Caco-2 (cell line): ENCODE measurements at regions of chr4 and their contacts with region 1.

Region 1: DNA sequence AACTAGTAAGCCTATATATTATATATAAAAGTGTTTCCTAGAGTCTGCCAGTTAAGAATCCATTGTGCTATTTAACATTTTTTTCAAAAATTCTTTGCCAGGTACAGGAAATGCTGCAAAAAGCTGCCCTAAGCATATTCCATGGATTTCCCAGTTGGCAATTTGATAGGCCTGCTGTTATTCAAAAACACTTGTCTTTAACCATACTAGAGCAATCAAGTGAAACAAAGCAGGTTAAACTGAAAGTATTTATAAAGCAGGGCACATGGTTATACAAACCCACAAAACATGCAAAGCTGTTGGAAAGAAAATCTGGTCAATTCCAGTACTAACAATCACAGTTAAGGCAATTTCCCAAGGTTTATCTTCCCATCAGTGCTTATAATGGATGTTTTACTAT is 159.9 kb downstream of the UNC5C start:
- DNase-seq: no peak
- H3K4me3 ChIP-seq: no peak overlapping the region
- H3K4me3 Mint-ChIP-seq: no peak overlapping the region
- H3K27ac Mint-ChIP-seq: no peak overlapping the region
- H3K4me1 ChIP-seq: peaks cover 40% of the 10 kb centered on the region
- H3K4me1 Mint-ChIP-seq: peaks cover 29% of the 10 kb centered on the region
- H3K27me3 ChIP-seq: no peaks in the 10 kb centered on the region
- H3K27me3 Mint-ChIP-seq: no peaks in the 10 kb centered on the region
- CTCF ChIP-seq: no peak

Region 2: GRCh38 chr4:95358421-95358820 is 30.5 kb before region 1 on chr4:
- CTCF ChIA-PET with region 1: no interaction called
- POLR2A ChIA-PET with region 1: no interaction called
- intact Hi-C with region 1: loop called (anchors 2 kb)
- DNase-seq: peak; percentile 13 to 39
- H3K4me3 ChIP-seq: no peak overlapping the region
- H3K4me3 Mint-ChIP-seq: no peak overlapping the region
- H3K27ac Mint-ChIP-seq: no peak overlapping the region
- H3K4me1 ChIP-seq: peaks cover 41% of the 10 kb centered on the region
- H3K4me1 Mint-ChIP-seq: peaks cover 9% of the 10 kb centered on the region
- H3K27me3 ChIP-seq: no peaks in the 10 kb centered on the region
- H3K27me3 Mint-ChIP-seq: no peaks in the 10 kb centered on the region
- CTCF ChIP-seq: no peak

Region 3: DNA sequence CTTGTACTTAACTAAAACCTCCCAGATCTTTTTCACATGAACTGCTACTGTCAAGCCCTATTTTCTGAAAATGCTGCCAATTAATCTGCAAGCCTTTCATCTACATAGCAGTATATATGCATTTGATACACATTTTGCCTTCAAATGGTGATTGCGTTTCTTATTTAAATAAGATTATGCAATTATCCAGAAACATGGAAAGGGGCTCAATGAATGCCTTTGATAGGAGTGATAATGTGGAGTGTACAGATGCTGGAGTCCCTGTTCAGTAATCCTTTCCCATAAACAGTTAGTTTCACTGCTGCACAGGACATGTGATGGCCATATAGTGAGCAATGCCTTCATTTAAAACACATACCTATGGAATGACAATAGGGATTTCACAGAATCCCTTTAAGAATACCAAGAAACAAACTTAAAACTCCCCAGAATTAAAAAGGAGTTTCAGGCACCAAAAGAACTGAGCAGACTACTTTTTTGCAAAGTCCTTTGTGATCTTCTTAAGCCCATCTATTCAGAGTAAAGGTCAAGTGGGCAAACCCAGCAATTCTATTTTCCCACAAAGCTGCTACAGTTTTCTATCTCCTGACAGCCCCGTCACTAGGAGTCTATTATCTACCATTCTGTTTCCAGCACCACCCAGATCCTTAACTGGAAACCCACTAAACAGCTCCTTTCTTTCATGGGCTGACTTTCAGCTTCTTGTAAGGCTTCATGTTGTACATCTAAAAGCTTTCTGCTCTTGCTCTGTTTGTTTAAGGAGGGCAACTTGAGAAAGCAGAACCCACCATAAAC is 39.6 kb after region 1 on chr4:
- CTCF ChIA-PET with region 1: no interaction called
- POLR2A ChIA-PET with region 1: no interaction called
- intact Hi-C with region 1: no loop called
- DNase-seq: no peak
- H3K4me3 ChIP-seq: no peak overlapping the region
- H3K4me3 Mint-ChIP-seq: no peak overlapping the region
- H3K27ac Mint-ChIP-seq: no peak overlapping the region
- H3K4me1 ChIP-seq: no peaks in the 10 kb centered on the region; the same call in 1 of the 2 replicates
- H3K4me1 Mint-ChIP-seq: peaks cover 4% of the 10 kb centered on the region
- H3K27me3 ChIP-seq: no peaks in the 10 kb centered on the region
- H3K27me3 Mint-ChIP-seq: no peaks in the 10 kb centered on the region
- CTCF ChIP-seq: no peak

Region 4: DNA sequence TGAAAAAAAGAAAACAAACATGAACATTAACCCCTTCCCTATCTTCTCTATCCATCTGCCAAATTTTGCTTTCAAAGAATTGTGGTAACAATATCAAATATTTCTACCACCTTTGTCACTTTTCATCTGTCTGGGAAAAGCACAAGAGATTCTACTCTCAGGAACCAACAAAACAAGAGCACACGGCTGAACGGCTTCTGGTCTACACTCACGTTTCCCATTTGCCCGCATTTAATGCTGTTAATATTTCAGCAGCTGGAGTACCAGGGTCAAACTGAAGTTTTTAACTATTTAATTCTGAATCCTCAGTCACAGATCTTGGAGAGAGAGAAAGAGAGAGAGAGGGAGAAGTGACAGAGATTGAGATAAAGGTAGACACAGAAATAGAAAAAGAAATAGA is 68.4 kb after region 1 on chr4:
- CTCF ChIA-PET with region 1: no interaction called
- POLR2A ChIA-PET with region 1: no interaction called
- intact Hi-C with region 1: loop called (anchors 1 kb)
- DNase-seq: no peak
- H3K4me3 ChIP-seq: no peak overlapping the region
- H3K4me3 Mint-ChIP-seq: no peak overlapping the region
- H3K27ac Mint-ChIP-seq: no peak overlapping the region
- H3K4me1 ChIP-seq: 0 out of 2 replicates have a peak, but pooled peaks cover 11% of the 10 kb centered on the region
- H3K4me1 Mint-ChIP-seq: peaks cover 10% of the 10 kb centered on the region
- H3K27me3 ChIP-seq: no peaks in the 10 kb centered on the region
- H3K27me3 Mint-ChIP-seq: no peaks in the 10 kb centered on the region
- CTCF ChIP-seq: no peak

Region 5: DNA sequence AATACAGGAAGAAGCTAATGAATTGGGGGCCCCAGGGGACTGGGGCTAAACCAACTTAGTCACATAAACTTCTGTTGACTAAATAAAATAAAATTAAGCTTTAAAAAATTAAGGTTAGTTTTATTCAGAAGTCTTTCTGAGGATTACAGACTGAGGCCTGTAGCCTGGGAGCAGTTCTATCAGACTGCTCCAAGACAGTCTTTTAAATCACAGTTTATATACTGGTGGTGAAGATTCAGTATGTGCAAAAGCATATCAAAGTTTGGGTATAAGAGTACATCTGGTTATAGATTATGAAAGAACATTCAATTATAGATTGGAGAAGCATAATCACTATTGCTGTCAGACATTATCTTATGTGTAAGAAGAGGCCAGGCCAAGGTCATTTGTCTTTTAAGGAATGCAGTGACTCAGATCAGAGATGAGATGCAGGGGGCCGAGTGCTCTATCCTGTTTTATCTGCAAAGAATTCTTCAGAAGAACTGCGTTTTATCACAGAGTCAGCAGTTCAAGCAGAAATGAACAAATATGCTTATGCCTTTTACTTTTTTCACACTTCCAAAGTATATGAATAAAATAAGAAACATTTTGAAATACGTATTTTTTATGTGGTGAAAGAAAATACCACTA is 560.3 kb after region 1 on chr4:
- CTCF ChIA-PET with region 1: no interaction called
- POLR2A ChIA-PET with region 1: no interaction called
- intact Hi-C with region 1: no loop called
- DNase-seq: no peak
- H3K4me3 ChIP-seq: no peak overlapping the region
- H3K4me3 Mint-ChIP-seq: no peak overlapping the region
- H3K27ac Mint-ChIP-seq: no peak overlapping the region
- H3K4me1 ChIP-seq: 0 out of 2 replicates have a peak, but pooled peaks cover 3% of the 10 kb centered on the region
- H3K4me1 Mint-ChIP-seq: no peaks in the 10 kb centered on the region
- H3K27me3 ChIP-seq: no peaks in the 10 kb centered on the region
- H3K27me3 Mint-ChIP-seq: no peaks in the 10 kb centered on the region
- CTCF ChIP-seq: no peak